ENCODE measurements at regions of chr15 and their contacts with region 1.

Region 1: DNA sequence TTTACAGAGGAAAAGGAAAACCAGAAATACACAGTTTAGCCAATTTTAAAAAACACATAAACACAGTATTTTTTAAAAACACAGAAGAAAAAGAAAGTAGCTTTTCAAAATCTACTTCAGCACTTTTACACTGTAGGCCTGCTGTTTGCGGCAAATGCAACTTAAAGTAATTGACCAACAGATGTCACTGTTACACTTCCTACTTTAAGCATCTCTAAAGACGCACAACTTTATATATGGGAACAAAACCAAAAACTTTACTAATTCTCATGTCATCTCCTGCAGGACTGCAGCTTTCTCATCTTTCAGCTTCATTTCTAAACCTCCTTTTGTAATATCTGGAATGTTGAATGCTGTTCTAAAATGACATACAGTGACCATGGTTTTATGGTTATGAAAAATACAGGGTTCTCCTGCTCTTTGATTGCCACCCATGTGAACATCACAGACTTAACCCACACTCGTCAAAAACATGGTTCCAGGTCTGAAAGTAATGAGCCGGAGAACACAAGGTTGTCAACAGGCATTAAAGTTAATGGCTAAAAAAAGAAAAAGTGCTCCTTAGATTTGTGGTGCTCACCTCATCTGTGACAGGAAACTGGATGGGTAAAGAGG is 107.9 kb downstream of the FMN1 start:
- DNase-seq: no peak
- ATAC-seq: peak; percentile 49
- H3K4me3 Mint-ChIP-seq: no peak overlapping the region
- H3K27ac Mint-ChIP-seq: no peak overlapping the region
- H3K4me1 Mint-ChIP-seq: peaks cover 43% of the 10 kb centered on the region
- H3K27me3 Mint-ChIP-seq: no peaks in the 10 kb centered on the region
- CTCF ChIP-seq: no peak

Region 2: GRCh38 chr15:33132722-33133345 is 46.2 kb after region 1 on chr15:
- CTCF ChIA-PET with region 1: interaction called, 27 read pairs
- POLR2A ChIA-PET with region 1: no interaction called
- DNase-seq: no peak
- ATAC-seq: peak; percentile 92
- H3K4me3 Mint-ChIP-seq: no peak overlapping the region
- H3K27ac Mint-ChIP-seq: no peak overlapping the region
- H3K4me1 Mint-ChIP-seq: peaks cover 11% of the 10 kb centered on the region
- H3K27me3 Mint-ChIP-seq: peaks cover 2% of the 10 kb centered on the region; the same call in 1 of the 2 replicates
- CTCF ChIP-seq: 0 out of 2 replicates have a peak, but pooled peaks have one; percentile 26

Measured in WTC11 (cell line).